Vagina (tissue), 2 donors: ENCODE measurements at regions of chr16 and their contacts with region 1.

Region 1: DNA sequence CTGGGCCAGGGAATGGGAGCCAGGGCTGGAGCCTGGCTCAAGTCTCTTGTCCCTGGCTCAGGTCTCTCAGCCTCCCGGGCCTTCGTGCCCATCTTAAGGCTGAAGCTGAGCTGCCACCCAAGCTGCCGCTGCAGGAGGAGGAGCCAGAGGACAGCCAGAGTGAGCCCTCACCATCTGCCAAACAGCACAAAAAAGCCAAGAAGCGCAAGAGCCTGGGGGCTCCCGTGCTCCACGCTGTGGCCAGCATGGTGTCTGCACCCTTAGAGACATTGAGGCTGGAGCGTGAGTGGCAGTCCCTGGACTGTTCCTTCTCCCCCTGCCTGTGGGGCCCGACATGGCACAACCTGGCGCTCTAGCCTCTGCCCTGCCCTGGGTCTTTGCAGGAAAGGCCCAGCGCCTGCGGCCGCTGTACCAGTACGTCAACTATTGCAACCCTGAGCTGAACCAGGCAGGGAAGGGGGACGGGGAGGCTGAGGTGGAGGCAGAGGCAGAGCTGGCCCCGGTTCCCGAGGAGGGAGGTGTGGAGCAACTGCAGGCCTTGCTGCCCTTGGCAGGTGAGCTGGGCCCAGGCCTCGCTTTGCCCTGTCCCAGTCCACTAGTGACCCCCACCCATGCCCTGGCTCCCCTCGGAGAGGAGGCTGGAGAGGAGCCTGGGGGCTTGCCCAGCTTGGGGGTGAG is 1.3 kb downstream of the C16orf86 start:
- DNase-seq: no peak
- H3K4me3 ChIP-seq: peak overlapping the region; percentile 67 to 78
- H3K27ac ChIP-seq: peak overlapping the region; percentile 90
- H3K4me1 ChIP-seq: peaks cover 40% of the 10 kb centered on the region
- H3K27me3 ChIP-seq: no peaks in the 10 kb centered on the region
- CTCF ChIP-seq: peak; percentile 32 to 86 (median 64)
- POLR2A ChIP-seq: no peak

Region 2: GRCh38 chr16:67521095-67521804 is 146.7 kb before region 1 on chr16:
- intact Hi-C with region 1: loop called (anchors 2 kb)
- DNase-seq: peak in 1 of 2 donors; percentile 94
- H3K4me3 ChIP-seq: peak overlapping the region; percentile 45 to 55
- H3K27ac ChIP-seq: peak overlapping the region; percentile 98
- H3K4me1 ChIP-seq: peaks cover 8% of the 10 kb centered on the region
- H3K27me3 ChIP-seq: no peaks in the 10 kb centered on the region
- CTCF ChIP-seq: peak; percentile 79 to 96 (median 86)
- POLR2A ChIP-seq: no peak

Region 3: DNA sequence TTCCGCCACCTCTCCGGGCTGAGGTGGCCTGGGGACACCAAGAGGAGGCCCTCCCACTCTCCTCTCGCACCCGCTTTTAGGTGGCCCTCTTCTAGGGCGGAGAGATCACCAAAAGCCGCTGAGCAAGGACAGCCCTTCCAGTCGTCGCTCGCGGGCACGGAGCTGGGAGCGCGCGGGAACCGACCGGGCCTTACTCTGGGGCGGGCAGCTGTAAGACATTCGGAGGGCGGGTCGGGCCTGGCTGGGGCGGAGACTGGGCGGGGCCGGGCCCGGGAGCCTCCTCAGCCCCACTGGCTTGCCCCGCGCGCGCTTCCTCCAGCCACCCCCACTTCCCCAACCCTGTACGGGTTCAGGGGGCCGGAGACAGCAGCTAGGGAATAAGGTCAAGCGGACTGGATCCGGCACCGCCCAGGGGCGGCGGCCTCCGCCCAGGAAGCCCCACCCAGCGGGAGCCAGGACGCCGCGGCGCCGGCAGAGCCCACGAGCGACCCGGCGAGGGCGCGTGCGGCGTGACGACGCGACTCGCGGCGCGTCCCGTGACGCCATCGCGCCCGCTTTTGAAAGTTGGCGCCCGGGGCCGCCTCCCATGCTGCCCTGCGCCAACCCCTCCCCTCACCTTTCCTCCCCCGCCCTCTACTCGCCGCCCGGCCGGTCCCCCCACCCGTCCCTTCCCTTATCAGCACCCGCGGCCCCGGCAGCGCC is 106.0 kb before region 1 on chr16:
- intact Hi-C with region 1: loop called (anchors 2 kb)
- DNase-seq: peak in 1 of 2 donors; percentile 98
- H3K4me3 ChIP-seq: peak overlapping the region; percentile 90 to 92
- H3K27ac ChIP-seq: peak overlapping the region; percentile 98
- H3K4me1 ChIP-seq: peaks cover 44% of the 10 kb centered on the region
- H3K27me3 ChIP-seq: no peaks in the 10 kb centered on the region
- CTCF ChIP-seq: no peak
- POLR2A ChIP-seq: peak in 1 of 2 donors; percentile 64